Transverse colon (tissue), 4 donors: ENCODE measurements at regions of chr21 and their contacts with region 1.

Region 1: GRCh38 chr21:17387030-17387617 is 125.7 kb upstream of the CXADR start:
- DNase-seq: peak; percentile 30
- H3K4me3 ChIP-seq: no peak overlapping the region
- H3K27ac ChIP-seq: no peak overlapping the region
- H3K4me1 ChIP-seq: no peaks in the 10 kb centered on the region
- H3K27me3 ChIP-seq: no peaks in the 10 kb centered on the region
- CTCF ChIP-seq: peak; percentile 75 to 88 (median 80)
- EP300 ChIP-seq: no peak
- POLR2A ChIP-seq: no peak

Region 2: GRCh38 chr21:17554679-17555465 is 167.7 kb after region 1 on chr21:
- in situ Hi-C with region 1: loop called in 1 of 4 experiments (anchors 25 kb)
- intact Hi-C with region 1: no loop called
- DNase-seq: no peak
- H3K4me3 ChIP-seq: no peak overlapping the region
- H3K27ac ChIP-seq: no peak overlapping the region
- H3K4me1 ChIP-seq: peaks cover 0 to 5% (median under 1%) of the 10 kb centered on the region in 4 donors
- H3K27me3 ChIP-seq: no peaks in the 10 kb centered on the region
- CTCF ChIP-seq: peak in 3 of 5 experiments; percentile 12 to 21 (median 15)
- EP300 ChIP-seq: no peak
- POLR2A ChIP-seq: no peak

Region 3: DNA sequence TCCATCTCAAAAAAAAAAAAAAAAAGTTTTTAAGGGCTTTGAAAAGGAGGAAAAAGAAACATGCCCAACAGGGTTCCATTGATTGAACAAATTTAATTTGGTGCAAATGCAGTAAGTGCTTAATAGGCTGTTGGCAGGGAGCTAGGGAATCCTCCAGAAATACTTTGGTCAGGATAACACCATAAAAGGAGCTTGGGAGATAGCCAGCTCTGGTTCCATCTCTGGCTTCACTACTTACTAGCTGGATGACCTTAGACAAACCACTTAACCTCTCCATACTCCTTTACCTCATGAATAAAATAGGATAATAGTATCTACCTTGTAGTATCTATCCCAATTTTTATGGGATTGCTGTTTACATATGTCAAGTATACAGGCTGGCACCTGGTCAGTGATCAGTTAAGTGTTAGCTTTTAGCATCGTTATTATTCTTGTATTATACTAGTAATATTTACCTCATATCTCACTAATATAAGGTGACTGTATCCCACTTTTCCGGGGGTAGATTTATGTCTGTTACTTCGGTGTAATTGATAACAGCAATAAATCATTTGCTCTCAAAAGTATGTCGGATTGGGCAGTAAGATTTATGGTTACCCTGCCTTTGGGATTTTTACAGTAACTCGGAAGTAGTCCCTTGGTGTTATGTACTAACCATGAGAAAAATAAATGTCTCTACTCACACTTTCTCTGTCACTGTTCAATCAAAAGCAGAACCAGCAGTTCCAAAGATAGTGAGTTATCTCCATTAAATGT is 189.1 kb after region 1 on chr21:
- in situ Hi-C with region 1: loop called in 3 of 4 experiments (anchors 10 to 25 kb)
- intact Hi-C with region 1: loop called (anchors 5 kb)
- DNase-seq: no peak
- H3K4me3 ChIP-seq: no peak overlapping the region
- H3K27ac ChIP-seq: no peak overlapping the region
- H3K4me1 ChIP-seq: peaks cover 0 to 19% (median 6%) of the 10 kb centered on the region in 4 donors
- H3K27me3 ChIP-seq: no peaks in the 10 kb centered on the region
- CTCF ChIP-seq: no peak
- EP300 ChIP-seq: no peak
- POLR2A ChIP-seq: no peak

Region 4: DNA sequence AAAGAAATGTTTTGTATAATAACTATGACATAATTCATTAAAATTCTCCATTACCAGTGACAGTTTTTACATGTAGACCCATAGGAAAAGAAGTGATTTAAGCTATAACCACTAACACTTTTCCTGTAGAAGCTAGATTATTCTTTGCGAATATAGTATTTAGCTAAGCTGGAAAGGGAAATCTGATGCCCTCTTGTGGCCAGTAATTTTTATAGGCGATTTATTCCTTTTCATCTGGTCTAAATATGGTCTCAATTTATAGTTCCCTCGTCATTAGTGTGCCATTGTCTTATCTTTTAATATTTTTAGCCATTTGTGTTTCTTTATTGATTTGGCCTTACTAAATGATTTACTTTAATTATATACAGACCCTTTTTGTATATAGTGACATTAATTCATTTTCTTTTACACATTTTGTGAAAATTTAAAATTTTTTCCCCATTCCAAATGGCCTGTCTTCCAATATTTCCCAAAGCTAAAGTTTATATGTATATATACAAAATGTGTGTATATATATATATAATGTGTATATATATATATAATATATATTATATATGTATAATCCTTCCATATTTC is 198.8 kb after region 1 on chr21:
- in situ Hi-C with region 1: loop called in 1 of 4 experiments (anchors 25 kb)
- intact Hi-C with region 1: loop called (anchors 5 kb)
- DNase-seq: no peak
- H3K4me3 ChIP-seq: no peak overlapping the region
- H3K27ac ChIP-seq: no peak overlapping the region
- H3K4me1 ChIP-seq: peaks cover 0 to 4% (median 0%) of the 10 kb centered on the region in 4 donors
- H3K27me3 ChIP-seq: no peaks in the 10 kb centered on the region
- CTCF ChIP-seq: peak; percentile 62 to 67 (median 63)
- EP300 ChIP-seq: no peak
- POLR2A ChIP-seq: no peak

Region 5: GRCh38 chr21:17688912-17689874 is 302.1 kb after region 1 on chr21:
- in situ Hi-C with region 1: no loop called
- intact Hi-C with region 1: no loop called
- DNase-seq: peak; percentile 42
- H3K4me3 ChIP-seq: no peak overlapping the region
- H3K27ac ChIP-seq: no peak overlapping the region
- H3K4me1 ChIP-seq: peaks cover 0 to 9% (median 0%) of the 10 kb centered on the region in 4 donors
- H3K27me3 ChIP-seq: no peaks in the 10 kb centered on the region
- CTCF ChIP-seq: peak in 1 of 5 experiments; percentile 25
- EP300 ChIP-seq: no peak
- POLR2A ChIP-seq: no peak

Region 6: DNA sequence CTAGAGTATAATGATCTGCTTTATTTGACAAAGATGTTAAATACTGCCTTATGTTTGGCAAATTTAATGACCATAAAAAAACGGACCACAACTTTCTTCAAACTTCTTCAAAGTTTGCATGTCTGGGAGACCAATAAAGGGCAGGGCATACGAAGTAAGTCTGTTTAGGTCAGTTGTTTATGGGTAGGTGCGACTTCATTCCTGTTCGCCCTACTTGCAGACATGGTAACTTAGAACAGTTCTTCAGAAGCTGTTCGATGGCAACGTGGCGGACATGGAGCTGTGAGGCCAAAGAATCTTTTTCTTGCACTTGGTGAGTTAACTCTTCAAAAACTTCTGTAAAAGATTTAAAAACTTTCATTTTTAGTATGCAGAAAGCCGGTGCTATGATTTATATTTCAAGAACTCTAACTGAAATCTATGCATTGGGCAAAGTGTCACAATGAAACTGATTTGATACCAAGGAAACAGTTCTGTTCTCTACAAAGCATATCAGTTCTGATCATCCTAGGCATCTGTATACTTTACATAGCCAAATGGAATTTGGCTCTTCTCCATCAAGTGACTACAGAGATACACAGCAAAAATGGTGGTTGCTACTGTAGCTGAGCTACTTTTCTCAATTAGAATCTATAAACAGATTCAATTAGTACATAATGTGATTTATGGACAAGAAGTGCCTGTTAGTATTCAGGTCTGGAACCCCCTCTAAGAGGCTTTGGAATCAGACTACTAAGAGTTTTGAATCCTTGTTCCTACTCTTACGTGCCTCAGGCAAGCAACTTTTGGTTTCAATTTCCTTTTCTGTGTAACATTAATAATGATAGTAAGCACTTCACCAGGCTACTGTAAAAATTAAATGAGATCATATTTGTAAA is 406.4 kb after region 1 on chr21:
- in situ Hi-C with region 1: no loop called
- intact Hi-C with region 1: no loop called
- DNase-seq: no peak
- H3K4me3 ChIP-seq: peak overlapping the region in 2 of 4 donors; percentile 11 to 41
- H3K27ac ChIP-seq: peak overlapping the region; percentile 39 to 67 (median 59)
- H3K4me1 ChIP-seq: peaks cover 0 to 27% (median 0%) of the 10 kb centered on the region in 4 donors
- H3K27me3 ChIP-seq: no peaks in the 10 kb centered on the region
- CTCF ChIP-seq: no peak
- EP300 ChIP-seq: no peak
- POLR2A ChIP-seq: no peak